ENCODE measurements at regions of chr6 and their contacts with region 1.

Region 1: DNA sequence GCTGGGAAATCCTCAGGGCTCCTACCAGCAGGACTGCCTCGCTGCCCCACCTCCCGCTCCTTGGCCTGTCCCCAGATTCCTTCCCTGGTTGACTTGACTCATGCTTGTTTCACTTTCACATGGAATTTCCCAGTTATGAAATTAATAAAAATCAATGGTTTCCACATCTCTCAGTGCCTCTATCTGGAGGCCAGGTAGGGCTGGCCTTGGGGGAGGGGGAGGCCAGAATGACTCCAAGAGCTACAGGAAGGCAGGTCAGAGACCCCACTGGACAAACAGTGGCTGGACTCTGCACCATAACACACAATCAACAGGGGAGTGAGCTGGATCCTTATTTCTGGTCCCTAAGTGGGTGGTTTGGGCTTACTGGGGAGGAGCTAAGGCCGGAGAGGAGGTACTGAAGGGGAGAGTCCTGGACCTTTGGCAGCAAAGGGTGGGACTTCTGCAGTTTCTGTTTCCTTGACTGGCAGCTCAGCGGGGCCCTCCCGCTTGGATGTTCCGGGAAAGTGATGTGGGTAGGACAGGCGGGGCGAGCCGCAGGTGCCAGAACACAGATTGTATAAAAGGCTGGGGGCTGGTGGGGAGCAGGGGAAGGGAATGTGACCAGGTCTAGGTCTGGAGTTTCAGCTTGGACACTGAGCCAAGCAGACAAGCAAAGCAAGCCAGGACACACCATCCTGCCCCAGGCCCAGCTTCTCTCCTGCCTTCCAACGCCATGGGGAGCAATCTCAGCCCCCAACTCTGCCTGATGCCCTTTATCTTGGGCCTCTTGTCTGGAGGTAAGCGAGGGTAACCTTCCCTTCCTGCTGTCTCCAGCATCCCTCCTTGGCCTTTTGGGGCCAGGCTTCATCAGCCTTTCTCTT is at the start of gene CFB:
- DNase-seq: peak in 4 of 5 donors; percentile 60 to 78 (median 68)
- ATAC-seq: peak; percentile 78 to 91 (median 82)
- H3K4me3 ChIP-seq: peak within 1 kb of the TSS in 8 of 12 donors; percentile 3 to 50 (median 34)
- H3K27ac ChIP-seq: peak within 1 kb of the TSS; percentile 18 to 86 (median 61)
- H3K4me1 ChIP-seq: peaks cover 0 to 17% (median 0%) of the 10 kb centered on the region in 12 donors
- H3K27me3 ChIP-seq: peaks cover 0 to 11% (median 0%) of the 10 kb centered on the region in 9 donors
- CTCF ChIP-seq: no peak
- POLR2A ChIP-seq: no peak
- total RNA-seq, gene CFB: 3.0 to 151 (median 5.3) TPM

Region 2: GRCh38 chr6:31908791-31909190 is 36.9 kb before region 1 on chr6:
- intact Hi-C with region 1: loop called in 6 of 10 experiments (anchors 5 to 10 kb)
- DNase-seq: no peak
- ATAC-seq: no peak
- H3K4me3 ChIP-seq: no peak overlapping the region
- H3K27ac ChIP-seq: no peak overlapping the region
- H3K4me1 ChIP-seq: peaks cover 0 to 16% (median 0%) of the 10 kb centered on the region in 12 donors
- H3K27me3 ChIP-seq: no peaks in the 10 kb centered on the region
- CTCF ChIP-seq: no peak
- POLR2A ChIP-seq: no peak

Measured in heart left ventricle (tissue), 16 donors.